ENCODE measurements at regions of chr4 and their contacts with region 1.

Region 1: DNA sequence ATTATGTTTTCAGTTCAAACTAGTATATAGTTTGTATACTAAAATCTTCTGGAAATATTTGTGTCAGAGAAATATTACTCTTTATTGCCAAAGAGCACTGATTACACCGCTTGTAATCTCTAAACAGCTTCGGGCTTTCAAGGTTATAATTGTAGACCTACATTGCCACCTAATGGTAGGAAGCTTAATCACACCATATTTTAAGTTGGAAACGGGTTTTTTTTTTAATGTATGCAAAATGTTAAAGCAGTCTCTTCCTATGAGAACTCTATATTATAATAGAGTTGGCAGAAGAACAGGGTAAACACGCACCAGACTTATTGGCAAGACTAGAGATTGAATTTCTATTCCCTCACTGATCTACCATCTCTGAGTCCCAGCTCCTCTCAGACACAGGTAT is 19.5 kb upstream of the NFXL1 start:
- DNase-seq: no peak

Region 2: GRCh38 chr4:47668810-47669408 is 264.9 kb before region 1 on chr4:
- intact Hi-C with region 1: loop called (anchors 2 kb)
- DNase-seq: peak in 1 of 10 donors; percentile 16